Activated CD4-positive, alpha-beta T cell treated with anti-CD3 and anti-CD28 coated beads, Interleukin-2, amount 10 ng/mL, durations not matched to agents 24 days and 14 days (primary cell): ENCODE measurements at regions of chrX and their contacts with region 1.

Region 1: GRCh38 chrX:119004920-119005524 is 30.6 kb downstream of the LONRF3 start:
- DNase-seq: peak; percentile 81
- H3K4me3 Mint-ChIP-seq: no peak overlapping the region
- H3K27ac Mint-ChIP-seq: no peak overlapping the region
- H3K4me1 Mint-ChIP-seq: no peaks in the 10 kb centered on the region
- H3K27me3 Mint-ChIP-seq: peaks cover 2% of the 10 kb centered on the region

Region 2: DNA sequence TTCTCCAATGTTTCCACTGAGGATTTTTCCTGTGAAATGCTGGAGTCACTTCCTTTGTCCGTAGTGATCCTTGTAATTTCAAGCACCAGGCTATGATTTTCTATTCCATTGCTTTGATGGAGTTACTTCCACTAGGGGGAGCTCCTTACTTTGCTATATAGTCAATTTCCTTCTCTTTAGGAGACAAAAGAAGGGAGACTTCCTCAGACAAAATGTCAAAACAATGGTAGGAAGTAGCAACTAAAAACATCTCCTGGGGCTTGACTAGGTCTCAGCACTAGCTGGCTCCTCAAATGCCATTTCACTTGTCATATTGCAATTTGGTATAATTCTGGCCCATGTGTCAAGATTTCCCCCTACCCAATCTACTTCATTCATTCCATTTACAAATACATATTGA is 157.3 kb before region 1 on chrX:
- intact Hi-C with region 1: loop called (anchors 1 kb)
- DNase-seq: peak; percentile 60
- H3K4me3 Mint-ChIP-seq: no peak overlapping the region
- H3K27ac Mint-ChIP-seq: no peak overlapping the region
- H3K4me1 Mint-ChIP-seq: no peaks in the 10 kb centered on the region
- H3K27me3 Mint-ChIP-seq: peaks cover 5% of the 10 kb centered on the region

Region 3: GRCh38 chrX:119067023-119067739 is 62.2 kb after region 1 on chrX:
- intact Hi-C with region 1: loop called (anchors 5 kb)
- DNase-seq: peak; percentile 69
- H3K4me3 Mint-ChIP-seq: no peak overlapping the region
- H3K27ac Mint-ChIP-seq: no peak overlapping the region
- H3K4me1 Mint-ChIP-seq: no peaks in the 10 kb centered on the region
- H3K27me3 Mint-ChIP-seq: peaks cover 2% of the 10 kb centered on the region

Region 4: DNA sequence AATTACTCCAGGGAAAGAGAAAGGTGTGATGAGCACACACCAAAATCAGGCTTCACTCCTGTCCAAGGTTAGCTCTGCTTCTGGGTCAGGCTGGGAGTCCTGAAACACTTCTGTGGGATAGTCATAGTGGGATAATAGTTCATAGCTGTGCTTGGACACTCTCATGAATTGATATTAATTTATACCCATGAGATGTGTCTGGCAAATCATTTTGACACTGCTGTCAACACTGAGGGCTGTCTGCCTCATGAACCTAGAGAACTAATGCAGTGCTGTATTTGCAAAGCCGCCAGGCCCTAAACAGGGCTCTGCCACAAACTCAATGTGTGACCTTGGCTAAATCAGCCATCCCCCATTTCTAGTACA is 206.6 kb after region 1 on chrX:
- intact Hi-C with region 1: loop called (anchors 10 kb)
- DNase-seq: no peak
- H3K4me3 Mint-ChIP-seq: no peak overlapping the region
- H3K27ac Mint-ChIP-seq: no peak overlapping the region
- H3K4me1 Mint-ChIP-seq: no peaks in the 10 kb centered on the region
- H3K27me3 Mint-ChIP-seq: peaks cover 13% of the 10 kb centered on the region